Endothelial cell of umbilical vein (primary cell): ENCODE measurements at regions of chr14 and their contacts with region 1.

Region 1: GRCh38 chr14:70086685-70087379 is 101.9 kb downstream of the SLC8A3 start:
- DNase-seq: peak; percentile 35
- H3K4me3 ChIP-seq: no peak overlapping the region
- H3K27ac ChIP-seq: no peak overlapping the region
- H3K4me1 ChIP-seq: no peaks in the 10 kb centered on the region
- H3K27me3 ChIP-seq: no peaks in the 10 kb centered on the region
- CTCF ChIP-seq: peak; percentile 34 to 51
- POLR2A ChIP-seq: no peak

Region 2: GRCh38 chr14:70073924-70074566 is 12.8 kb before region 1 on chr14:
- CTCF ChIA-PET with region 1: interaction called, 13 read pairs
- POLR2A ChIA-PET with region 1: no interaction called
- dilution Hi-C with region 1: no loop called
- intact Hi-C with region 1: no loop called
- DNase-seq: peak; percentile 35
- H3K4me3 ChIP-seq: no peak overlapping the region
- H3K27ac ChIP-seq: no peak overlapping the region
- H3K4me1 ChIP-seq: no peaks in the 10 kb centered on the region
- H3K27me3 ChIP-seq: no peaks in the 10 kb centered on the region
- CTCF ChIP-seq: peak; percentile 71 to 83
- POLR2A ChIP-seq: no peak

Region 3: GRCh38 chr14:70254476-70254961 is 167.7 kb after region 1 on chr14:
- CTCF ChIA-PET with region 1: interaction called, 4 read pairs
- POLR2A ChIA-PET with region 1: no interaction called
- dilution Hi-C with region 1: no loop called
- intact Hi-C with region 1: loop called (anchors 5 kb)
- DNase-seq: peak; percentile 30
- H3K4me3 ChIP-seq: peak overlapping the region; percentile 16 to 46 (median 43)
- H3K27ac ChIP-seq: no peak overlapping the region
- H3K4me1 ChIP-seq: no peaks in the 10 kb centered on the region
- H3K27me3 ChIP-seq: peaks cover 2 to 6% of the 10 kb centered on the region in 2 experiments
- CTCF ChIP-seq: no peak
- POLR2A ChIP-seq: no peak

Region 4: DNA sequence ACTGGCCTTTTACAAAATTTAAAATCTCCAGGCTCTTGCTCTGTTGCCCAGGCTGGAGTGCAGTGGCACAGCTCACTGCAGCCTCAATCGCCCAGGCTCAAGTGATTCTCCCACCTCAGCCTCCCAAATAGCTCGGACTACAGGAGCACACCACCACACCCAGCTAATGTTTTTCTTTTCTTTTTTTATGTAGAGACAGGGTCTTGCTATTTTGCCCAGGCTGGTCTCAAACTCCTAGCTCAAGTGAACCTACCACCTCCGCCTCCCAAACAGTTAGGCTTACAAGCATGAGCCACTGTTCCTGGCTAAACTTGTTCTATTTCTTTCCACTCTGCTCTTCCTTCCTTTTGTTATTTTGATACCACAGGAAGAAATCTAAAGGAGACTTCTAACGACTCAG is 314.8 kb after region 1 on chr14:
- CTCF ChIA-PET with region 1: interaction called, 8 read pairs
- POLR2A ChIA-PET with region 1: no interaction called
- dilution Hi-C with region 1: no loop called
- intact Hi-C with region 1: loop called (anchors 10 kb)
- DNase-seq: no peak
- H3K4me3 ChIP-seq: no peak overlapping the region
- H3K27ac ChIP-seq: no peak overlapping the region
- H3K4me1 ChIP-seq: no peaks in the 10 kb centered on the region
- H3K27me3 ChIP-seq: no peaks in the 10 kb centered on the region
- CTCF ChIP-seq: no peak
- POLR2A ChIP-seq: no peak

Region 5: DNA sequence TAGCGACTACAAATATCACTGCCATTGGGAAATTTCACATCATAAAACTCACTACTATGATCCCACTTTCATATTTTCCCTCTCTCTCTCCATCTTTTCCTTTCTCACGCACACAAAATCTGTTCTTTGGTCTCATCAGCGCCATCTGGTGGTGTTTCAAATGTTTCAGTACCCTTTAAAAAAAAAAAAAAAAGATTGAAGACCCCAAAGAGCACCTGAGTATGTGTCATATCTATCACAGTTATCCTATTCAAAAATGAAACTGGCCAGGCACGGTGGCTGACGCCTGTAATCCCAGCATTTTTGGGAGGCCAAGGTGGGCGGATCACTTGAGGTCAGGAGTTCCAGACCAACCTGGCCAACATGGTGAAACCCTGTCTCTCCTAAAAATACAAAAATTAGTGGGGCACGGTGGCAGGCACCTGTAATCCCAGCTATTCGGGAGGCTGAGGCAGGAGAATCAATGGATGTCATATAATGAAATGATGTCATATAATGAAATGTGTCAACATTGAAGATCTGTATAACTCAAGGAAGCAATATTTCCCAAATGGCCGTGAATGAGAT is 627.3 kb after region 1 on chr14:
- CTCF ChIA-PET with region 1: interaction called, 16 read pairs
- POLR2A ChIA-PET with region 1: no interaction called
- dilution Hi-C with region 1: no loop called
- intact Hi-C with region 1: no loop called
- DNase-seq: peak; percentile 67
- H3K4me3 ChIP-seq: no peak overlapping the region
- H3K27ac ChIP-seq: no peak overlapping the region
- H3K4me1 ChIP-seq: no peaks in the 10 kb centered on the region
- H3K27me3 ChIP-seq: peaks cover 3 to 14% of the 10 kb centered on the region in 2 experiments
- CTCF ChIP-seq: peak; percentile 33 to 46
- POLR2A ChIP-seq: no peak